ENCODE measurements at regions of chr6 and their contacts with region 1.

Region 1: DNA sequence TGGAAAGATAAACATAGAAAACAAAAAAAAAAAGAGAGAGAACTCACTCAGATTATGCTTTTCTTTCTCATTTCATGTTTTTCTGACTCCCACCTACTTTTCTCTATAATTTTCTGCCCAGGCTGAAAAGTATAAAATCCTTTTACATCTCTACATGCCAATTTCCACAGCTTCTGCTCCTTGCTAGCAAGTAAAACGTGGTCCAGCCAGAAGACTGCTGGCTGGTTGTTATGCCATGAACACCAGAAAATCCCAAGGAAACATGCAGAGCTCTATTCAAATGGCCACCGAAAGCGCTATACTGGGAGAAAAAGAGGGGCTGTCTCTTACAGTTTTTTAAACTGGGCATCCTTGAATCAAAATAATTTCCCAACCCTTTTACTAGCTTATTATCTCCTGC is 512.8 kb upstream of the ID4 start:
- DNase-seq: no peak
- H3K4me3 Mint-ChIP-seq: no peak overlapping the region
- H3K27ac Mint-ChIP-seq: no peak overlapping the region
- H3K4me1 Mint-ChIP-seq: no peaks in the 10 kb centered on the region
- H3K27me3 Mint-ChIP-seq: no peaks in the 10 kb centered on the region
- CTCF ChIP-seq: no peak

Region 2: DNA sequence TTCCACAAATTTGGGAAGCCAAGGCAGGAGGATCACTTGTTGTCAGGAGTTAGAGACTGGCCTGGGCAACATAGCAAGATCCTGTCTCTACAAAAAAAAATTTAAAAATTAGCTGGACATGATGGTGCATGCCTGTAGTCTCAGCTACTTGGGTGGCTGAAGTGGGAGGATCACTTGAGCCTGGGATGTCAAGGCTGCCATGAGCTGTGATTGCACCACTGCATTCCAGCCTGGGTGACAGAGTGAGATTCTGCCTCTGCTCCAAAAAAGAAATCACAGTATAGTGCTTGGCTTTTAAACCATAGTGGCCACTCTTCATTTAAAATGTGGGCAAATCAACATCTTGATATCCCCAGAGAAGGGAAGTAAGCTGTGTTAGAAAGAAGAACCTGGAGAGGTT is 508.3 kb before region 1 on chr6:
- CTCF ChIA-PET with region 1: no interaction called
- intact Hi-C with region 1: no loop called
- DNase-seq: no peak
- H3K4me3 Mint-ChIP-seq: no peak overlapping the region
- H3K27ac Mint-ChIP-seq: no peak overlapping the region
- H3K4me1 Mint-ChIP-seq: no peaks in the 10 kb centered on the region
- H3K27me3 Mint-ChIP-seq: no peaks in the 10 kb centered on the region
- CTCF ChIP-seq: no peak

Region 3: GRCh38 chr6:19558201-19558600 is 233.8 kb after region 1 on chr6:
- CTCF ChIA-PET with region 1: interaction called, 10 read pairs
- intact Hi-C with region 1: no loop called
- DNase-seq: no peak
- H3K4me3 Mint-ChIP-seq: no peak overlapping the region
- H3K27ac Mint-ChIP-seq: no peak overlapping the region
- H3K4me1 Mint-ChIP-seq: no peaks in the 10 kb centered on the region
- H3K27me3 Mint-ChIP-seq: no peaks in the 10 kb centered on the region
- CTCF ChIP-seq: no peak

Measured in Calu3 (cell line).